Heart left ventricle (tissue), 16 donors: ENCODE measurements at regions of chr10 and their contacts with region 1.

Region 1: GRCh38 chr10:24449321-24449740 is 240.4 kb downstream of the KIAA1217 start:
- DNase-seq: no peak
- ATAC-seq: peak; percentile 61 to 90 (median 72)
- H3K4me3 ChIP-seq: peak overlapping the region in 11 of 12 donors; percentile 10 to 58 (median 43)
- H3K27ac ChIP-seq: peak overlapping the region; percentile 10 to 74 (median 62)
- H3K4me1 ChIP-seq: peaks cover 6 to 58% (median 30%) of the 10 kb centered on the region in 12 donors
- H3K27me3 ChIP-seq: no peaks in the 10 kb centered on the region
- CTCF ChIP-seq: no peak
- POLR2A ChIP-seq: no peak

Region 2: DNA sequence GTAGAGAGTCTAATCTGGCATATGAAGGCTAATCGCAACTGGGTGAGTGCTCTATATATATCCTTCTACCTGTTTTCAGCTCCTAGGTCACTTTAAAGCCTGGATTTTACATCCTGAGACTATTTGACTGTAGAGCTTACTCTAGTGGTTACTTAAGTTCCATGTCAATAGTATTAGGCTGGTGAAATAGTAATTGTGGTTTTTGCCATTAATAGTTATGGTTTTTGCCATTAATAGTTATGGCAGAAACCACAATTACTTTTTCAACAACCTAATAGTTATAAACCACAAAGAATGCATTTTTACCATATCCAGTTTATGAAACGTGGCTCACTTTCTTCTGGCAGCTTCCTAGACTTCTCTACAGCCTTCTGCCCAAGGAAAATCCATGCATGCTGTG is 503.5 kb before region 1 on chr10:
- intact Hi-C with region 1: no loop called
- DNase-seq: no peak
- ATAC-seq: no peak
- H3K4me3 ChIP-seq: no peak overlapping the region
- H3K27ac ChIP-seq: no peak overlapping the region
- H3K4me1 ChIP-seq: no peaks in the 10 kb centered on the region
- H3K27me3 ChIP-seq: no peaks in the 10 kb centered on the region
- CTCF ChIP-seq: no peak
- POLR2A ChIP-seq: no peak

Region 3: GRCh38 chr10:24496906-24497305 is 47.6 kb after region 1 on chr10:
- intact Hi-C with region 1: loop called in 2 of 10 experiments (anchors 5 kb)
- DNase-seq: no peak
- ATAC-seq: no peak
- H3K4me3 ChIP-seq: no peak overlapping the region
- H3K27ac ChIP-seq: no peak overlapping the region
- H3K4me1 ChIP-seq: peaks cover 0 to 6% (median 0%) of the 10 kb centered on the region in 12 donors
- H3K27me3 ChIP-seq: no peaks in the 10 kb centered on the region
- CTCF ChIP-seq: no peak
- POLR2A ChIP-seq: no peak